ENCODE measurements at regions of chr1 and their contacts with region 1.

Region 1: DNA sequence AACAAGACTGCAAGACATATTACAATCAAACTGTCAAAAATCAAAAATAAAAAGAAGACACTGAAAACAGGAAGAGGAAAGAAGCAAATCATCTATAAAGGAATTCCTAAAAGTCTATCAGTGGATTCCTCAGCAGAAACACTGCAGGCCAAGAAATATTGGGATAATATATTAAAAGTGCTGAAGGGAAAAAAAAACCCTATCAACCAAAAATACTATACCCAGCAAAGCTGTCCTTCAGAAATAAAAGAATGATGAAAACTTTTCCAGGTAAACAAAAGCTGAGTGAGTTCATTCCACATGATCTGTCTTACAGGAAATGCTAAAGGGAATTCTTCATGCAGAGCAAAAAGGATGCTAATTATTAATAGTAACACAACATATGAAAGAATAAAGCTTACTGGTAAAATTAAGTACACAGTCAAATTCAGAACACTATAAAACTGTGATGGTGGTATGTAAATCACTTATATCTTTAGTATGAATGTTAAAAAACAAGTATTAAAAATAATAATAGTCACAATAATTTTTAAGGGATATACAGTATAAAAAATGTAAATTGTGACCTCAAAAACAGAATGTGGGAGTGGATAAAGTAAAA is 12.9 kb upstream of the ACP6 start:
- DNase-seq: no peak
- H3K4me3 ChIP-seq: no peak overlapping the region
- H3K27ac ChIP-seq: no peak overlapping the region
- H3K4me1 ChIP-seq: no peaks in the 10 kb centered on the region
- H3K27me3 ChIP-seq: no peaks in the 10 kb centered on the region
- CTCF ChIP-seq: no peak

Region 2: DNA sequence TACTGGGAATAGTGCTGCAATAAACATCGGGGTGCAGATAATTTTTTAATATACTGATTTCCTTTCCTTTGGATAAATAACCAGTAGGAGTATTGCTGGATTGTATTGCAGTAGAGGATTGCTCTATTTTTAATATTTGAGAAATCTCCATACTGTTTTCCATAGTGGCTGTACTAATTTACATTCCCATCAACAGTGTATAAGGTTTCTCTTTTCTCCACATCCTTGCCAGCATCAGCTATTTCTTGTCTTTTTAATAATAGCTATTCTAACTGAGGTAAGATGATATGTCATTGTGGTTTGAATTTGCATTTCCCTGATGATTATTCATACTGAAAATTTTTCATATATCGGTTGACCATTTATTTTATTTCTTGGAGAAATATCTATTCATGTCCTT is 46.1 kb after region 1 on chr1:
- CTCF ChIA-PET with region 1: no interaction called
- POLR2A ChIA-PET with region 1: interaction called, 20 read pairs
- intact Hi-C with region 1: no loop called
- DNase-seq: no peak
- H3K4me3 ChIP-seq: no peak overlapping the region
- H3K27ac ChIP-seq: no peak overlapping the region
- H3K4me1 ChIP-seq: peaks cover 5% of the 10 kb centered on the region; the same call in 1 of the 2 replicates
- H3K27me3 ChIP-seq: no peaks in the 10 kb centered on the region
- CTCF ChIP-seq: no peak

Measured in PC-9 (cell line).